HepG2 (cell line): ENCODE measurements at regions of chr17 and their contacts with region 1.

Region 1: DNA sequence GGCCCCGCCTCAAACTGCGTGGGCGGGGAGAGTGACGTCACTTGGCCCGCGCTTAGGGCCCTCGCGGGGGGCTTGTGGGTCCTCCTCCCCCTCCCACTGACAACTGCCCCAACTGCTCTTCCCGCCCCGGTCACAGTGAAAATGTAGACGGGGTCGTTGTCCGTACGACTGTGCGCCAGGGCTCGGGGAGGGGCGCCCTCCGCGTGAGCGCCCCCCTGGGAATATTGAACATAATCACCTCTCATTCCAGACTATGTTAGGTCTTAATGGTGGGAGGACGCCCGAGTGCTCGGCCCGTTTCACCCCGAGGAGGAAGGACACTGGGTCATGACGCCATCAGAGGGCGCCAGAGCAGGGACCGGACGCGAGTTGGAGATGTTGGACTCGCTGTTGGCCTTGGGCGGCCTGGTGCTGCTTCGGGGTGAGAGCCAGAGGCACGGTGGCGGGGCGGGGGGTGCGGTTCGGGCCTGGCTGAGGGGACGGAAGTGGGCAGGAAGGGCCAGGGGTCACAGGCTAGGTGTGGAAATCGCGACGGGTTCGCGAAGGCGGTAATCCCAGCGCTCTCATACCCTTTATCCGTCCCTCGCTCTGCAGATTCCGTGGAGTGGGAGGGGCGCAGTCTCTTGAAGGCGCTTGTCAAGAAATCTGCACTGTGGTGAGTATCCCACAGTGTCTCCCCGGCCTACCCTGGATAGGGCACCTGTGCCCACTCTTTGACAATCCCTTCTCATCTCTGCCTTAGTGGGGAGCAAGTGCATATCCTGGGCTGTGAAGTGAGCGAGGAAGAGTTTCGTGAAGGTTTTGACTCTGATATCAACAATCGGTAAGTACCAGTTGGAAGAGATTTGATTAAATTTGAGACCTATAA is at the start of gene ELP5:
- DNase-seq: peak; percentile 94
- ATAC-seq: peak; percentile 74
- H3K4me3 ChIP-seq: peak within 1 kb of the TSS; percentile 95 to 99 (median 96)
- H3K27ac ChIP-seq: peak within 1 kb of the TSS; percentile 99
- H3K4me1 ChIP-seq: peaks cover 43% of the 10 kb centered on the region
- H3K27me3 ChIP-seq: peaks cover 0 to 2% of the 10 kb centered on the region in 2 experiments; a peak in 1 of 5 replicates
- CTCF ChIP-seq: peak; percentile 96
- EP300 ChIP-seq: peak in 1 of 2 experiments; percentile 27; a peak in 1 of 4 replicates
- POLR2A ChIP-seq: peak; percentile 44 to 86
- RAD21 ChIP-seq: peak; percentile 59
- total RNA-seq, gene ELP5: 68.0 and 69.8 TPM in 2 replicates

Region 2: DNA sequence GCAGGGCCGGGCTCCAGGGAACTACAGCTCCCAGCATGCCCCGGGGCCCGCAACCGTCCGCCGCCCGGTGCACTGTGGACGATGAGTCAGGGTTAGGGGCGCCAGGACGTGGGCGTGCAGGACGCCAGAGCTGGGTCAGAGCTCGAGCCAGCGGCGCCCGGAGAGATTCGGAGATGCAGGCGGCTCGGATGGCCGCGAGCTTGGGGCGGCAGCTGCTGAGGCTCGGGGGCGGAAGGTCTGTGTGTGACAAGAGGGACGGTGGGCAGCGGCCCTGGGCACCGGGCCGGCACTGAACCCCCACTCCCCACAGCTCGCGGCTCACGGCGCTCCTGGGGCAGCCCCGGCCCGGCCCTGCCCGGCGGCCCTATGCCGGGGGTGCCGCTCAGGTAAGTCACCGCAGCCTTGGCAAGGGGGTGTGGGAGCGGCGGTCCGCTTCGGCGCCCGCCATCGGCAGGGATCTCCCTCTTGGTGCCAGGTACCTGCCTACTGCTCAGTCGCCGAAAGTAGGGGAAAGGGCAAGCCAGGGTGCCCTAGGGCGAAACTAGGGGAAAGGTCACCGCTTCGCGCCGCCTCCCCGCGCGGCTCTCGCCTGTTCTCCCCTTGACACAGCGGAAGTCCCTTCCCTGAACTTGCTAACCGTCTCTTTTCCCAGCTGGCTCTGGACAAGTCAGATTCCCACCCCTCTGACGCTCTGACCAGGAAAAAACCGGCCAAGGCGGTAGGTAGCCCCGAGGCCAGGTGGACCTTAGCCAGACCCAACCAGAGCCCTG is 32.4 kb before region 1 on chr17 and contains the starts of genes ACADVL and DLG4:
- CTCF ChIA-PET with region 1: no interaction called
- POLR2A ChIA-PET with region 1: interaction called, 10 read pairs
- in situ Hi-C with region 1: no loop called
- intact Hi-C with region 1: no loop called
- DNase-seq: peak; percentile 75
- ATAC-seq: peak; percentile 85
- H3K4me3 ChIP-seq: peak within 1 kb of the TSS; percentile 73 to 93 (median 90)
- H3K27ac ChIP-seq: peak within 1 kb of the TSS; percentile 96
- H3K4me1 ChIP-seq: peaks cover 62% of the 10 kb centered on the region
- H3K27me3 ChIP-seq: peaks cover 0 to 4% of the 10 kb centered on the region in 2 experiments; a peak in 2 of 5 replicates
- CTCF ChIP-seq: 0 out of 2 replicates have a peak, but pooled peaks have one; percentile 8
- EP300 ChIP-seq: no peak
- POLR2A ChIP-seq: peak; percentile 88 to 94
- RAD21 ChIP-seq: peak; percentile 46; the same call in 1 of the 2 replicates
- total RNA-seq, gene ACADVL: 106 and 219 TPM in 2 replicates
- total RNA-seq, gene DLG4: 0.25 and 0.71 TPM in 2 replicates

Region 3: GRCh38 chr17:7234083-7234951 is 18.1 kb before region 1 on chr17 and contains the start of gene DVL2:
- CTCF ChIA-PET with region 1: no interaction called
- POLR2A ChIA-PET with region 1: interaction called, 35 read pairs
- in situ Hi-C with region 1: no loop called
- intact Hi-C with region 1: no loop called
- DNase-seq: peak; percentile 88
- ATAC-seq: peak; percentile 62
- H3K4me3 ChIP-seq: peak within 1 kb of the TSS; percentile 66 to 93 (median 89)
- H3K27ac ChIP-seq: peak within 1 kb of the TSS; percentile 79
- H3K4me1 ChIP-seq: peaks cover 53% of the 10 kb centered on the region
- H3K27me3 ChIP-seq: no peaks in the 10 kb centered on the region; a peak in 1 of 5 replicates
- CTCF ChIP-seq: no peak; the same call in 1 of the 2 replicates
- EP300 ChIP-seq: peak in 1 of 2 experiments; percentile 56; a peak in 2 of 4 replicates
- POLR2A ChIP-seq: peak; percentile 45 to 93; a peak in 3 of 4 replicates
- RAD21 ChIP-seq: peak; percentile 75
- total RNA-seq, gene DVL2: 27.2 and 38.2 TPM in 2 replicates

Region 4: GRCh38 chr17:7239091-7240027 is 13.1 kb before region 1 on chr17 and contains the start of gene PHF23:
- CTCF ChIA-PET with region 1: no interaction called
- POLR2A ChIA-PET with region 1: interaction called, 35 read pairs
- in situ Hi-C with region 1: no loop called
- intact Hi-C with region 1: no loop called
- DNase-seq: peak; percentile 97
- ATAC-seq: peak; percentile 66
- H3K4me3 ChIP-seq: peak within 1 kb of the TSS; percentile 97 to 98 (median 98)
- H3K27ac ChIP-seq: peak within 1 kb of the TSS; percentile 88
- H3K4me1 ChIP-seq: peaks cover 54% of the 10 kb centered on the region
- H3K27me3 ChIP-seq: no peaks in the 10 kb centered on the region; a peak in 1 of 5 replicates
- CTCF ChIP-seq: no peak
- EP300 ChIP-seq: 0 out of 4 replicates have a peak, but pooled peaks of 1 of the 2 experiments have one; percentile 28
- POLR2A ChIP-seq: peak; percentile 51 to 69; a peak in 3 of 4 replicates
- RAD21 ChIP-seq: 0 out of 2 replicates have a peak, but pooled peaks have one; percentile 9
- total RNA-seq, gene PHF23: 33.2 and 37.5 TPM in 2 replicates

Region 5: DNA sequence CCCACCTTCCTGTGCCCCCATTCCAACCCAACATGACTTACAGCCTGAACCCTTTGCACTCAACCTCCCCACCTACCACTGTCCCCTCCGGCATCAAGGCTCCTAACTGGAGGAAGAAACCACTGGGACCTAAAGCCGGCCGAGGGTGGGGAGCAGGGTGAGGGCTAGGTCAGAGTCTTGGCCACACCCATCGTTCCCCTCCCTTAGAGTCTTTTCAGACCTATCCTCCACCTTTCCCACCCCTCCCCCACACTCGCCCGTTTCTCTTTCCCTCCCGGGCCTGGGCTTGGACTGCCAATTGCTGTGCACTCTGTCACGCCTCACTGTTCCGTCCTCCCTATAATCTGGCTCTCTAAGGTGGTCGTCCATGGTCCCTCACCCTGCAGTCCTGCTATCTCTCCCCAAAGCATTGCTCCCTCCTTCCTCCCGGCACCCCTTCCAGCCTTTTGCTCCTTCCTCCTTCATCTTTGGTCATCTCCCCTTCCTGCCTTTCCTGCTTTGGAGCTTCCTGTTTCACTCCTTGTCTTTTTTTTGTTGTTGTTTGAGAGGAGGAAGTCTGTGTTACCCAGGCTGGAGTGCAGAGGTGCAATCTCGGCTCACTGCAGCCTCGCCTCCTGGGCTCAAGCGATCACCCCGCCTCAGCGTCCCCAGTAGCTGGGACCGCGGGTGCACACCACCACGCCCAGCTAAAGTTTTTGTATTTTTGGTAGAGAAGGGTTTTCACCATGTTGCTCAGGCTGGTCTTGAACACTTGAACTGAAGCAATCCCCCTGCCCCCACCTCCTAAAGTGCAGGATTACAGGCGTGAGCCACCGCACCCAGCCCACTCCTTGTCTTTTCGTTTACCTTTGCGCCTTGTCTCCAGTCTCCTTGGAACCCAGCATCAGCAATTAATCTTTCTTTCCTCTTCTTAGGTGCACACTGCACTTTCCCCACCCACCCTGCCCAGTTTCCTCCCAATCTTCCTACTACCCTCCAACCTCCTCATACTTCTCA is 11.0 kb after region 1 on chr17:
- CTCF ChIA-PET with region 1: no interaction called
- POLR2A ChIA-PET with region 1: interaction called, 13 read pairs
- in situ Hi-C with region 1: no loop called
- intact Hi-C with region 1: no loop called
- DNase-seq: no peak
- ATAC-seq: no peak
- H3K4me3 ChIP-seq: no peak overlapping the region
- H3K27ac ChIP-seq: peak overlapping the region; percentile 64
- H3K4me1 ChIP-seq: peaks cover 61% of the 10 kb centered on the region
- H3K27me3 ChIP-seq: no peaks in the 10 kb centered on the region
- CTCF ChIP-seq: no peak
- EP300 ChIP-seq: no peak
- POLR2A ChIP-seq: no peak
- RAD21 ChIP-seq: no peak